Breast epithelium (tissue), 4 donors: ENCODE measurements at regions of chr2 and their contacts with region 1.

Region 1: GRCh38 chr2:750628-751027 is 73.4 kb upstream of the TMEM18 start:
- DNase-seq: no peak
- H3K4me3 ChIP-seq: no peak overlapping the region
- H3K27ac ChIP-seq: no peak overlapping the region
- H3K4me1 ChIP-seq: no peaks in the 10 kb centered on the region
- H3K27me3 ChIP-seq: no peaks in the 10 kb centered on the region
- CTCF ChIP-seq: no peak
- POLR2A ChIP-seq: no peak

Region 2: GRCh38 chr2:762646-763045 is 12.0 kb after region 1 on chr2:
- intact Hi-C with region 1: loop called (anchors 1 kb)
- DNase-seq: no peak
- H3K4me3 ChIP-seq: no peak overlapping the region
- H3K27ac ChIP-seq: no peak overlapping the region
- H3K4me1 ChIP-seq: no peaks in the 10 kb centered on the region
- H3K27me3 ChIP-seq: no peaks in the 10 kb centered on the region
- CTCF ChIP-seq: no peak
- POLR2A ChIP-seq: no peak